SK-N-SH (cell line): ENCODE measurements at regions of chr19 and their contacts with region 1.

Region 1: DNA sequence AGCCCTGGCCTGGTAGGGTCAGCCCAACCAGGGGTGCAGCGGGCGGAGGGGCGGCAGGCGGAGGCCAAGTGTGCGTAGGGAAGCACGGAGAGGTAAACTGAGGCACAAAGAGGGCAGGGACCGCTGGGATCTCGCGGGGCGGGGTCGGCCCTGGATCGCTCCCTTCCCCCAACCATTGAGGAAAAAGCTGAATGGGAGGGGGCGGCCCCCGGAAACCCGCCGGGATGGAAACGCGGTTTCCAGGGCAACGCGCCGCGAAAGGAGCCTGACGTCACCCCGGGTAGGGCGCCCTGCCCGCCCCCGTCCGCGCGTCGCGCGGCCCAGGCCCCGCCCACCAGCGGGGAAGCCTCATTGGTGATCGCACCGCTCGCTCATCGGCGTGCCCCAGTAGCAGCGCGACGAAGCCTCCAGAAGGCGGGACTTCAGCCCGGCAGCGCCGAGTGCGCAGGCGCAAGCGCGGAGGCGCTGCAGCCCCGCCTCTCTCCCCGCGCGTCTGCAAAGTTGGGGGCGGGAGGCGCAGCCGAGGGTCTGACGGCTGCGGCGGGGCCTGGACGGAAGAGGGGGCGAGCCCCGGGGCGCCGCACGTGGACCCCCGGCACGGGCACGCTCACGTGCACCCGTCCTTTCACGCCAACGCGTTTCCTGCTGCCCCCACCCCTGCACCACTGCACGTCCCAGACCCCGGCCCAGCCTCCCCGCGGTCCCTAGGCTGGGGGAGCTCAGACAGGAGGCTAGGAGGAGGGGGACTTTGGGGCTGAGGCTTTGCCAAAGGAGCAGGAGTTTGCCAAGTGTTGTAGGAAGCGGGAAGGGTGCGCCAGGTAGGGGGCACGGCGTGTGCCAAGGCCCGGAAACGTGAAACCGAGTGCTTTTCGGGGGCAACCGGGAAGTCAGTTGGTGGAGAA is 8.2 kb upstream of the CIRBP start:
- DNase-seq: peak; percentile 97
- H3K4me3 ChIP-seq: peak overlapping the region; percentile 72 to 86
- H3K27ac ChIP-seq: peak overlapping the region; percentile 89 to 92
- H3K4me1 ChIP-seq: peaks cover 54% of the 10 kb centered on the region in 2 experiments
- H3K27me3 ChIP-seq: no peaks in the 10 kb centered on the region
- CTCF ChIP-seq: no peak
- EP300 ChIP-seq: no peak
- RAD21 ChIP-seq: no peak

Region 2: DNA sequence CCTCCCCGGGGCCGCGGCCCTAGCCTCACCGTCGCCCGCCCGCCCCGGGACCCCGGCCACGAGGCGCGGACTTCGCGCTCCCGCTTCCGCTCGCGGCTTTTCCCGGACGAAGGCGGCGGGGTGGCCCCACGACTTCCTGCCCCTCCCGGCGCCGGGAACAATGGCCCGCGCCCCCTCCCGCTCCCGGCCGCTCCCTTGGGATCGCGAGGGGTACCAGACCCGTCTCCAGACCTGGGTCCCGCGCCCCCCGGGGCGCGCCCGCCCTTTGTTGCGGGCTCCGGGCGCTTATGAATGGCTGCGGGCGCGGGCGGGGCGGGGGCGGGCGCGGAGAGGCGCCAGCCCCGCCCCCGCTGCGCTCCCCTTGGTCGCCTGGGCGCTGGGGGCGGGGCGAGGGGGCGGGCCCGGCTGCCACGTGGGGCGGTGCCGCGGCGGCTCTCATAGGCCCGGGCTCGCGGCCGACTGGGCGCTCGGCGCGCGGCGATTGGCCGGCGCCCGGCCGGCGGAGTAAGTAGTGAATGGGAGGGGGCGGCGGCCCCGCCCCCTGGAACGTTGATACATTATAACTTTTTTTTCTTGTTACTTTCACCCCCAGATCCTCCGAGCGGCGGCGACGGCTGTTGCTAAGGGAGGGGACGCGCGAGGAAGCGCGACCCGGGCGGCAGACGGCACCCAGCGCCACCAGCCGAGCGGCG is 11.4 kb before region 1 on chr19:
- CTCF ChIA-PET with region 1: interaction called, 594 read pairs
- POLR2A ChIA-PET with region 1: interaction called, 32 read pairs
- DNase-seq: peak; percentile 92
- H3K4me3 ChIP-seq: peak overlapping the region; percentile 79 to 88
- H3K27ac ChIP-seq: peak overlapping the region; percentile 95 to 96
- H3K4me1 ChIP-seq: peaks cover 15 to 38% of the 10 kb centered on the region in 2 experiments; a peak in 3 of 4 replicates
- H3K27me3 ChIP-seq: no peaks in the 10 kb centered on the region
- CTCF ChIP-seq: no peak
- EP300 ChIP-seq: no peak
- RAD21 ChIP-seq: no peak